Mammary epithelial cell (primary cell): ENCODE measurements at regions of chr6 and their contacts with region 1.

Region 1: GRCh38 chr6:139597771-139598755 is 223.6 kb upstream of the CITED2 start:
- DNase-seq: peak; percentile 81
- H3K4me3 ChIP-seq: no peak overlapping the region
- H3K27ac ChIP-seq: peak overlapping the region; percentile 63
- H3K4me1 ChIP-seq: peaks cover 22% of the 10 kb centered on the region
- H3K27me3 ChIP-seq: no peaks in the 10 kb centered on the region
- CTCF ChIP-seq: no peak

Region 2: GRCh38 chr6:139547111-139547776 is 50.8 kb before region 1 on chr6:
- CTCF ChIA-PET with region 1: no interaction called
- dilution Hi-C with region 1: loop called (anchors 5 kb)
- in situ Hi-C with region 1: no loop called
- intact Hi-C with region 1: no loop called
- DNase-seq: no peak
- H3K4me3 ChIP-seq: no peak overlapping the region
- H3K27ac ChIP-seq: no peak overlapping the region
- H3K4me1 ChIP-seq: no peaks in the 10 kb centered on the region
- H3K27me3 ChIP-seq: no peaks in the 10 kb centered on the region
- CTCF ChIP-seq: no peak